ENCODE measurements at regions of chr14 and their contacts with region 1.

Region 1: GRCh38 chr14:24605435-24606190 is 3.9 kb downstream of the GZMH start:
- DNase-seq: peak; percentile 77
- CTCF ChIP-seq: peak; percentile 86

Region 2: GRCh38 chr14:24595073-24595808 is 10.4 kb before region 1 on chr14:
- CTCF ChIA-PET with region 1: interaction called, 16 read pairs
- POLR2A ChIA-PET with region 1: no interaction called
- DNase-seq: no peak
- CTCF ChIP-seq: no peak

Region 3: GRCh38 chr14:24630872-24631477 is 25.4 kb after region 1 on chr14:
- CTCF ChIA-PET with region 1: interaction called, 20 read pairs
- POLR2A ChIA-PET with region 1: no interaction called
- DNase-seq: no peak
- CTCF ChIP-seq: no peak

Region 4: GRCh38 chr14:24678801-24679247 is 73.2 kb after region 1 on chr14:
- CTCF ChIA-PET with region 1: interaction called, 23 read pairs
- POLR2A ChIA-PET with region 1: no interaction called
- DNase-seq: peak; percentile 77
- CTCF ChIP-seq: peak; percentile 97